AG04450 (cell line): ENCODE measurements at regions of chr12 and their contacts with region 1.

Region 1: GRCh38 chr12:32183650-32184049 is 77.0 kb downstream of the BICD1 start:
- DNase-seq: no peak
- H3K4me3 ChIP-seq: no peak overlapping the region
- H3K27ac ChIP-seq: no peak overlapping the region
- H3K27me3 ChIP-seq: no peaks in the 10 kb centered on the region
- CTCF ChIP-seq: no peak

Region 2: DNA sequence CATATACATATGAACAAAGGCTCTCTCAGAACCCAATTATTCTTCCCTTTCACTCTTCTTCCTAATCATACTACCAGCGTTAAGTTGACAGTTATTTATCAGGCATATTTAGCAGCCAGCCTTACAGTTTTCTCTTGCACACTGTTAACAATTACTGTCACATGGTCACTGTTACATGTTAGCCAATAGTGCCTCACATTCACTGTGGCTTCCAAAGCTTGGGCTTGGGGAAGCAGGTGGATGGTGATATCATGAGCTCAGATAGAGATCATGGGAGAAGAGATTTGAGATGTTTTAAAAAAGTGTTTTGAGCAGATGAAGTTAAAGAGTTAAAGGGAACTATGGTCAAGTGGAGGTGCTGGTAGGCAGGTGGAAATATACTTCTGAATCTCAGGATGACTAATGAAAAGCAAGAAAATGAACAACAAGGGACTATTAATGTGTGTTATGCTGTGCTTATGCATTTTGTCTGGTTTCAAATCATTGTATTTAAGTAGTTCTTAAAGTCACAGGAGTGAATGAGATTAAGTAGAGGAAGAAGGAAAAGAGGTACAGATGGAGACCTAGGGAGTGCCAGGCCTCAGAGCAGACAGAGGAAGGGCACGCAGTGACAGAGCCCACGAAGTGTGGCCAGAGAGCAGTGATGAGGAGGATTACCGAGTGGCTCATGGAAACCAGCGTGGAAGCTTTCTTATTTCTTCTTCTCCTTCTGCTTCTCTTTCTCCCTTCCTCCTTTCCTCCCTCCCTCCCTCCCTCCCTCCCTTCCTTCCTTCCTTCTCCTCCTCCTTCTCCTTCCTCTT is 37.4 kb before region 1 on chr12:
- CTCF ChIA-PET with region 1: interaction called, 11 read pairs
- POLR2A ChIA-PET with region 1: no interaction called
- DNase-seq: no peak
- H3K4me3 ChIP-seq: no peak overlapping the region
- H3K27ac ChIP-seq: no peak overlapping the region
- H3K27me3 ChIP-seq: no peaks in the 10 kb centered on the region
- CTCF ChIP-seq: no peak